ENCODE measurements at regions of chr10 and their contacts with region 1.

Region 1: GRCh38 chr10:118568327-118568848 is 27.1 kb downstream of the PRLHR start:
- DNase-seq: peak in 1 of 2 donors; percentile 86
- H3K4me3 ChIP-seq: peak overlapping the region in 2 of 4 donors; percentile 7 to 13
- H3K27ac ChIP-seq: peak overlapping the region in 1 of 5 donors; percentile 79
- H3K4me1 ChIP-seq: peaks cover 0 to 48% (median 31%) of the 10 kb centered on the region in 4 donors
- H3K27me3 ChIP-seq: peaks cover 0 to 7% (median 0%) of the 10 kb centered on the region in 3 donors
- CTCF ChIP-seq: peak in 5 of 7 experiments; percentile 78 to 95 (median 88)
- EP300 ChIP-seq: no peak
- POLR2A ChIP-seq: no peak

Region 2: GRCh38 chr10:118383699-118384098 is 184.7 kb before region 1 on chr10:
- intact Hi-C with region 1: no loop called
- DNase-seq: no peak
- H3K4me3 ChIP-seq: no peak overlapping the region
- H3K27ac ChIP-seq: no peak overlapping the region
- H3K4me1 ChIP-seq: no peaks in the 10 kb centered on the region
- H3K27me3 ChIP-seq: peaks cover 0 to 45% (median 0%) of the 10 kb centered on the region in 3 donors
- CTCF ChIP-seq: no peak
- EP300 ChIP-seq: no peak
- POLR2A ChIP-seq: no peak

Region 3: DNA sequence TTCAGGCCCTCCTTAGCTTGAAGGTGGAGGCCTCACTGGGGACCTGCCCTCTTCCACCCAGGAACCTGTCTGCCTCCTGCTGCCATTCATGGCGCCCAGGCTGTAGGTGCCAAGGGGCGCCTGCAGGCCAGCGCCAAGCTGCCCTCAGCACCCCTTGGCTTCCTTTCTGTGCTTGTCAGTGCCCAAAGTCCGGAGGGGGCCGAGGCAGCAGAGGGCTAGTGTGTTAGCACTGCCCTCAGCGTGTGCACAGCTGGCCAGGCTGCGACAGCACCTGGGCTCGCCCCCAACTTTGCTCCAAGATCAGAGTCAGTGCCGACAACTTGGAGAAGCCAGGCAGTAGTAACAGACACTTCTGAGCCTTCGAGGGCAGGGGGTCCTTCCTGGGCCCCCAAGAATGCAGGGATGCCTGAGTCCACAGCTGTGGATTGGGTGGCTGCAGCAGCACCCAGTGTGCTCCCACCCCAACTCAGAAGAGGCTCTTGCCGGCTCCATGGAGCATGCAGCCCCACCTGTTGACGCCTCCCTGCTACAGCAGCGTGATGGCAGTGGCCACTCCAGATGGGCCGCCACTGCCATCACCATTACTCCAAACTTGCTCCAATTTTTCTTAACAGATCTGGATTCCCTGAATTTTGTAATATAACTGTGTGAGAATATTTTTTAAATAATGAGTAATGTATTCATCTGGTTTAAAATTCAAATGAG is 144.7 kb after region 1 on chr10:
- intact Hi-C with region 1: loop called (anchors 5 kb)
- DNase-seq: no peak
- H3K4me3 ChIP-seq: no peak overlapping the region
- H3K27ac ChIP-seq: no peak overlapping the region
- H3K4me1 ChIP-seq: peaks cover 0 to 37% (median under 1%) of the 10 kb centered on the region in 4 donors
- H3K27me3 ChIP-seq: no peaks in the 10 kb centered on the region
- CTCF ChIP-seq: no peak
- EP300 ChIP-seq: no peak
- POLR2A ChIP-seq: no peak

Region 4: GRCh38 chr10:119006451-119007210 is 438.2 kb after region 1 on chr10:
- intact Hi-C with region 1: no loop called
- DNase-seq: peak; percentile 66 to 69
- H3K4me3 ChIP-seq: no peak overlapping the region
- H3K27ac ChIP-seq: peak overlapping the region in 4 of 5 donors; percentile 29 to 75 (median 64)
- H3K4me1 ChIP-seq: peaks cover 9 to 21% (median 11%) of the 10 kb centered on the region in 4 donors
- H3K27me3 ChIP-seq: peaks cover 0 to 6% (median 0%) of the 10 kb centered on the region in 3 donors
- CTCF ChIP-seq: no peak
- EP300 ChIP-seq: no peak
- POLR2A ChIP-seq: no peak